ENCODE measurements at regions of chr1 and their contacts with region 1.

Region 1: GRCh38 chr1:230426246-230427093 is at the start of gene PGBD5:
- DNase-seq: peak; percentile 65 to 94 (median 82)
- H3K4me3 ChIP-seq: peak within 1 kb of the TSS; percentile 54 to 88 (median 73)
- H3K27ac ChIP-seq: peak within 1 kb of the TSS; percentile 3 to 91 (median 81)
- H3K27me3 ChIP-seq: no peaks in the 10 kb centered on the region
- CTCF ChIP-seq: peak in 29 of 56 donors; percentile 11 to 43 (median 30)
- total RNA-seq, gene PGBD5: 42.3 to 119 (median 92.1) TPM

Region 2: DNA sequence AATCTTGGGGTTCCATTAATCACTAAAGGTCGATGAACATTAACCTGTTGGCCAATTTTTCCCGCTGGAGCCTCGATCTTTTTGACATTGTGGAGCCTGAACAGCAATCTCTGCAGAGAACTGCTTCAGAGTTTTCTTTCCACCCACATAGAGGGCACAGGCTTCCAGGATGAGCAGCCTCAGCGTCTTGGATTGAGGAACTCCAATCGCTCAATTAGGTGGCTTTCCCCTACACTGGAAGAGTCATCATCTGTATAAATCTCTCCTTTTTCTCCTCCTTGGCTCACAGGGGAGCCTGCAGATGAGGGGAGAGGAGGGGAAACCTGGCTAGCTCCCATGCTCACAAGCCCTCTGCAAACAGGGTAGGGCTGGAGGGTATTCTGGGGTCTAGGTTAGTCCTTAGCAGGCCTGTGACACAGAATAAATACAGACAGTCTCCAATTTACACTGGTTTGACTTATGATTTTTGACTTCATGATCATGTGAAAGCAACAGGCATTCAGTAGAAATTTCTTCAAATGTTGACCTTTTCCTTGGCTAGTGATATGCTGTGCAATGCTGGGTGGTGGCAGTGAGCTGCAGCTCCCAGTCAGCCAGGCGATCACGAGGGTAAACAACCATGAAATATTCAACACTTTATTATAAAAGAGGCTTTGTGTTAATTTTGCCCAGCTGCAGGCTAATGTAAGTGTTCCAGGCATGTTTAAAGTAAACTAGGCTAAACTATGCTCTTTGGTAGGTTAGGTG is 81.2 kb before region 1 on chr1:
- intact Hi-C with region 1: loop called (anchors 5 kb)
- DNase-seq: peak in 6 of 10 donors; percentile 59 to 76 (median 68)
- H3K4me3 ChIP-seq: peak overlapping the region in 4 of 59 donors; percentile 1 to 32 (median 22)
- H3K27ac ChIP-seq: peak overlapping the region; percentile 30 to 99 (median 96)
- H3K27me3 ChIP-seq: no peaks in the 10 kb centered on the region
- CTCF ChIP-seq: peak in 8 of 56 donors; percentile 10 to 40 (median 16)

Region 3: GRCh38 chr1:230375780-230376179 is 50.7 kb before region 1 on chr1:
- intact Hi-C with region 1: loop called (anchors 2 to 5 kb)
- DNase-seq: peak in 7 of 10 donors; percentile 57 to 78 (median 65)
- H3K4me3 ChIP-seq: peak overlapping the region in 12 of 59 donors; percentile 4 to 42 (median 13)
- H3K27ac ChIP-seq: peak overlapping the region; percentile 51 to 97 (median 88)
- H3K27me3 ChIP-seq: no peaks in the 10 kb centered on the region
- CTCF ChIP-seq: no peak

Region 4: DNA sequence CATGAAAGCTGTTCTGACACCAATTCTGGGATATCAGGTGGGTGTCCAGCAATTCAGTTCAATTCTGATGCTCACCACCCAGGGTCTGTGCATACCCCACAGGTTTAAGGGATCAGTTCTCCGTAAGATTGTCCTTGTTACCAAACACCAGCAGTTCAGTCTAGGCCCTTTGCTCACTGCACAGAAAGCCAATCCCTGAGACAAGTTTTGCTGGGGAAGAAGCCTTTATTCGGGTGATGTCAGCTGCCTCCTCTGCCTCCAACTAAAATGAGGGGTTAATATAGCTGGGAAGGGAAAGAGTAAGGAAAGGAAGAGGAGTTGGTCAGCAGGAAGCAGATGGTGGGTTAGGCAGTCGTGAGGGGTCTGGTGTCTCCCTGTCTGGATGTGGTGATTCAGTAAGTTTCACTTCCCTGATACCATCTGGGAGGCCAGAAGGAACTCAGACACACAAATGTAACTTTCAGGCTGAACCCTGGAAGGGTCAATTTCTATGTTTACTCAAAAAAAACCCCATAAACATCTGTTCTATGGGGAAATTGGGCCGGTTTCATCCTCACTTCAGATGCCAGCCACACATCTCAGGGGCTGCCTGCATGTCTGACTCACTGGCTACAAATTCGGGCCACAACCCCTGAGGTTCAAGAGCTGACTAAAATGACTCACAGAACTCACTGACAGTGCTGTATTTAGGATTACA is 83.0 kb after region 1 on chr1:
- intact Hi-C with region 1: loop called (anchors 5 kb)
- DNase-seq: peak in 1 of 10 donors; percentile 52
- H3K4me3 ChIP-seq: no peak overlapping the region
- H3K27ac ChIP-seq: peak overlapping the region in 12 of 59 donors; percentile 4 to 71 (median 33)
- H3K27me3 ChIP-seq: no peaks in the 10 kb centered on the region
- CTCF ChIP-seq: no peak

Region 5: GRCh38 chr1:230517786-230518185 is 91.3 kb after region 1 on chr1:
- intact Hi-C with region 1: loop called in 1 of 2 experiments (anchors 5 kb)
- DNase-seq: peak in 3 of 10 donors; percentile 31 to 47 (median 45)
- H3K4me3 ChIP-seq: no peak overlapping the region
- H3K27ac ChIP-seq: no peak overlapping the region
- H3K27me3 ChIP-seq: peaks cover 0 to 3% (median 0%) of the 10 kb centered on the region in 45 donors
- CTCF ChIP-seq: no peak

Region 6: DNA sequence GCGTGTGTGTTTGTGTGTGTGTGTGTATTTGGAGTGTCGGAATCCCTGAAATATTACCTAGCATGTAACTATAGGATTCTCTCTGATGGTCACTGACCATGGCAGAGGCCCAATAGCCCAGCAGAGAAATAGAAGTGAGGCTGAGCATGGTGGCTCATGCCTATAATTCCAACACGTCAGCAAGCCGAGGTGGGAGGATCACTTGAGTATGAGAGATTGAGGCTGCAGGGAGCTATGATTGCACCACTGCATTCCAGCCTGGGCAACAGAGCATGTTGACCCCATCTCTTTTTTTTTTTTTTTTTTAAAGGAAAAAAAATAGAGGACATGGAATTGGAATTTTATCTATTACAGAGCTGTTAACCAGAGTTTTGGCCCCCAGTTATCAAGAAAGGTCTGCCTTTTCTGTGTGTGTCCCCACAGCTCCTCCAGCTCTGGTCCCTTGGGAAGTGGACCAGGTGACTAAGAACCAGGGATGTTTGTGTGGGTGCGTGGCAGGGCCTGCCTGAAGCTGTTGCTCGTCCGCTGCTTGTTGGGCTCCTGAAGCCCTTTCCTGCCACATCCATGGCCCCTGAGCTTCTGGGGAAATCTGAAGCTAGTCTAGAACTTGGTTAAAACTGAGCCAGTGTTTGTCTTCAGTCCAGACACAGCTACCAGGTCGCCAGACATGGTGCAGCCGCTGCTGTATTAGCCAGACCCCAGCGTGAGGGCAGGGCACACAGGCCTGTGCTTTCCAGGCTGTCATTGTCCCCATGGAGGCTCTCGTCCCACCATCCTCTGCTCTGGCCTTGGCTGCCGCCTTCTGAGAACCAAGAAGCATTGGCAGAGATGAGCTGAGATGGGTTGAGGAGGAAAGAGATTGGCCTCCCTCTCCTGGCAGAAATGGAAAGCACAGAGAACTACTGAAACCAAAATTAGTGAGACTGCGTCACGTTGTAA is 346.3 kb after region 1 on chr1:
- intact Hi-C with region 1: loop called (anchors 10 kb)
- DNase-seq: peak; percentile 59 to 85 (median 79)
- H3K4me3 ChIP-seq: peak overlapping the region in 53 of 59 donors; percentile 4 to 66 (median 41)
- H3K27ac ChIP-seq: peak overlapping the region in 54 of 59 donors; percentile 1 to 84 (median 63)
- H3K27me3 ChIP-seq: no peaks in the 10 kb centered on the region
- CTCF ChIP-seq: peak; percentile 40 to 94 (median 86)

Region 7: GRCh38 chr1:231357831-231358354 is 931.4 kb after region 1 on chr1:
- intact Hi-C with region 1: no loop called
- DNase-seq: peak in 2 of 10 donors; percentile 20 to 36
- H3K4me3 ChIP-seq: peak overlapping the region in 1 of 59 donors; percentile 8
- H3K27ac ChIP-seq: peak overlapping the region in 1 of 59 donors; percentile 32
- H3K27me3 ChIP-seq: no peaks in the 10 kb centered on the region
- CTCF ChIP-seq: peak; percentile 72 to 98 (median 86)